Activated CD4-positive, alpha-beta T cell treated with anti-CD3 and anti-CD28 coated beads, Interleukin-2, amount 10 ng/mL, durations not matched to agents 24 days and 14 days (primary cell): ENCODE measurements at regions of chr3 and their contacts with region 1.

Region 1: GRCh38 chr3:183555541-183556081 is at the start of gene KLHL6:
- DNase-seq: peak; percentile 91
- H3K4me3 Mint-ChIP-seq: peak within 1 kb of the TSS; percentile 95
- H3K27ac Mint-ChIP-seq: peak within 1 kb of the TSS; percentile 99
- H3K4me1 Mint-ChIP-seq: peaks cover 55% of the 10 kb centered on the region
- H3K27me3 Mint-ChIP-seq: no peaks in the 10 kb centered on the region
- total RNA-seq, gene KLHL6: 44.9 and 47.1 TPM in 2 replicates

Region 2: GRCh38 chr3:183285828-183286457 is 269.7 kb before region 1 on chr3:
- intact Hi-C with region 1: loop called (anchors 5 kb)
- DNase-seq: peak; percentile 96
- H3K4me3 Mint-ChIP-seq: peak overlapping the region; percentile 82
- H3K27ac Mint-ChIP-seq: peak overlapping the region; percentile 97
- H3K4me1 Mint-ChIP-seq: peaks cover 32% of the 10 kb centered on the region
- H3K27me3 Mint-ChIP-seq: no peaks in the 10 kb centered on the region

Region 3: DNA sequence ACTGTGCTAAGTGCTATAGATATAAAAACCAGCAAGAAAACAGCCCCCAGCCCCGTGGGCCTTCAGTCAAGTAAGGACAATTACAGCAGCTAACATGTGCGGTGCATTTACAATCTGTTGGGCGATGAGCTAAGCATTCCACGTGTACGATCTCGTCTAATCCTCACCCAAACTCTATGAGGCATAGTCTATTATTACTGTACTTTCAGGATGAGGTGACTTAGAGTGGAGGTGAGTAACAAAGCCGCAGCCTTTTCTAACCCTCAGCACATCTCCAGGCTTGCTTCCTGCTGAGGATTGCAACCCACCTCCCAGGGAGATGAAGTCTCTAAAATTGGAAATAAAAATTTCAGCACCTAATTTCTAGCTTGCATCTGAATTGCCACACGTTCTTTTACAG is 74.0 kb before region 1 on chr3:
- intact Hi-C with region 1: loop called (anchors 2 kb)
- DNase-seq: no peak
- H3K4me3 Mint-ChIP-seq: no peak overlapping the region
- H3K27ac Mint-ChIP-seq: no peak overlapping the region
- H3K4me1 Mint-ChIP-seq: peaks cover 5% of the 10 kb centered on the region
- H3K27me3 Mint-ChIP-seq: peaks cover under 1% of the 10 kb centered on the region

Region 4: DNA sequence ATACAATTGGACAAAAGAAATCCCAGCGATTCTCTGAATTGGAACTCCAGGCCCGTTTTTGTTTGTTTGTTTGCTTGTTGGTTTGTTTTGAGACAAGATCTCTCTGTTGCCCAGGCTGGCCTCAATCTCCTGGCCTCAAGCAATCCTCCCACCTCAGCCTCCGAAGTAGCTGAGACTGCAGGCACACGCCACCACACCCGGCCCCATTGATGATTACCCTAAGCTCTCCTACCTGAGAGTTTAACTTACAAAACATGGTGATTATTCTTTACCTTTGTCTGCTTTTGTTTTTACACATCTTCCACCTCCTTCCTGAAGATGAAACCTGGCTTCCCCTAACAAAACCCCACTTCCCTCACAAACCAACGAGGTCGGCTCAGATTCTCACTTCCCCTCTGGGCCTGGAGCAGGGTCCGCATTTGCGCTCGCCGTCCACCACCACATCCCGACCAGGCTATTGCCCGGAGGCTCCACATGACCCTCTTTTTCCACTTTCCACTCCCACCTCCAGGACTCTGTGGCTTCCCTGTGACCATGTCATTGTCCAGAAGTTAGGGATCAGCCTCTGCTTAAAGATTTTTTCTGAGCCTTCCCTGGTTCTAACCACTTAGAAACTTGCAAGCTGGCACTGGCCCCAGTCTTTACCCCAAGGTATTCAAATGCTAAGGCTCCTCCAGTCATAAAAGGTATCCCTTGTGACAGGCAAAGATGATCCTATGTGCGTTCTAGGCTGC is 14.9 kb before region 1 on chr3:
- intact Hi-C with region 1: loop called (anchors 2 kb)
- DNase-seq: no peak
- H3K4me3 Mint-ChIP-seq: peak overlapping the region; percentile 25
- H3K27ac Mint-ChIP-seq: peak overlapping the region; percentile 56
- H3K4me1 Mint-ChIP-seq: peaks cover 73% of the 10 kb centered on the region
- H3K27me3 Mint-ChIP-seq: no peaks in the 10 kb centered on the region

Region 5: DNA sequence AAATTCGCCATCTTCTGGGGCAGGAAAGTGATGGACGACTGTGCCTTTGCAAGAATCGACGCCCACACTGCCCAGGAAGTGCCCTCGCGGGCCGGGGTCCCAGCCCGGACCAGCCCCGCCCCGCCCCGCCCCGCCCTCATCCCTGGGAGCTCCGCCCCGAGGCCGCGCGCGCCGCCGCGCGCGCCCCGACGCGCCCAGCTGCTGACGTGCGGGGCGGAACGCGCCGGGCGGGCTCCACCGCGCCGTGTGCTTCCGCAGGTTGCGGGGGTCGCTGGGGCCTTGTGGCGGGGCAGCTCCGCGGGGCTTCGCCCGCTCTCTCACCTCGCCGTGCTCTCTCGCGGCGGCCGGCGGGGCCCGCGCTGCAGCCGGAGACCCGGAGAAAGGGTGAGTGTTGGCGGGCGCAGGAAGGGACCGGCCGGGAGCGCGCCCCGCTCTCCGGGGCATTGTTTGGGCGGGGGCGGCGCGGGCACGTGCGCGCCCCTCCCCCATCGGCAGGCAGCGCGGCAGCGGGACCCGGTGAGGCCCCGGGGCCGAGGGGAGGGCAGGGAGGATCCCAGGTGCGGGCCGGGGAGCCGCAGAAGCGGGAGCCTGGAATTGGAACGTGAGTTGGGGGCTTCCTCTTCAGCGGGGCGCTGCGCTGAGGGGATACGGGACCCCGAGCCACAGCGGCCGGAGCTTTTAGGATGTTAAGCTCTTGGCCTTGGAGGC is 142.2 kb after region 1 on chr3 and contains the start of gene YEATS2:
- intact Hi-C with region 1: loop called (anchors 2 kb)
- DNase-seq: peak; percentile 91
- H3K4me3 Mint-ChIP-seq: peak within 1 kb of the TSS; percentile 92
- H3K27ac Mint-ChIP-seq: peak within 1 kb of the TSS; percentile 85
- H3K4me1 Mint-ChIP-seq: peaks cover 31% of the 10 kb centered on the region
- H3K27me3 Mint-ChIP-seq: no peaks in the 10 kb centered on the region
- total RNA-seq, gene YEATS2: 58.4 and 62.2 TPM in 2 replicates